ENCODE measurements at regions of chr3 and their contacts with region 1.

Region 1: DNA sequence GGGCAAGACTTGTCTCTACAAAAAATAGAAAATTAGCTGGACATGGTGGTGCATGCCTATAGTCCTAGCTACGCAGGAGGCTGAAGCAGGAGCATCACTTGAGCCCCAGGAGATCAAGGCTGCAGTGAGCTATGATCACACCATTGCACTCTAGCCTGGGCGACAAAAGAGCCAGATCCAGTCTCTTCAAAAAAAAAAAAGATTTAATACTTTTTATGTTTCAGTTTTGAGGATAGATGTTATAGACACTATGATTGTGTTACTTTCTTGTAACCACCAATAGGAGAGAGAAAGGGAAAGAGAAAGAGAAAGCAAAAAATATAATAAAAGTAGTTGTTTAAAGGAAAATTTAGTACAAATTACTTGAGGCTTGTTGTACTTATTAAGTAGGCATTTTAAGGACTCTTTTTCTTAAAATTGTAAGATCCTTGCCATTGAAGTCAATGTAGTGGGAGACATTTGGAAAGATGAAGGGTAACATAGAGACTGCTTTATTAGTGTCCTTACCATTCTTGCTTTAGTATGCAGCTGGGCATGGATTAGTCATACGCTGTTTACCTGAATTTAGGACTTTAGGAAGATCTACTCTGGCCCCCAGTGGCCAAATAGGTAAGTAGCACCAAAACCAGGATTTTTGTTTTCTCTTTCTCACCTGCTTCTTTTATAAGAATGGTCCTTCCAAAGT is 35.1 kb upstream of the ZDHHC23 start:
- DNase-seq: peak; percentile 90
- ATAC-seq: peak; percentile 96
- H3K4me3 ChIP-seq: peak overlapping the region; percentile 10; the same call in 1 of the 2 replicates
- H3K27ac ChIP-seq: no peak overlapping the region
- H3K4me1 ChIP-seq: 0 out of 2 replicates have a peak, but pooled peaks cover 4% of the 10 kb centered on the region
- H3K27me3 ChIP-seq: no peaks in the 10 kb centered on the region
- CTCF ChIP-seq: peak; percentile 91

Region 2: GRCh38 chr3:113736548-113737089 is 176.1 kb before region 1 on chr3:
- CTCF ChIA-PET with region 1: interaction called, 6 read pairs
- POLR2A ChIA-PET with region 1: no interaction called
- intact Hi-C with region 1: loop called (anchors 1 kb)
- DNase-seq: peak; percentile 85
- ATAC-seq: peak; percentile 77
- H3K4me3 ChIP-seq: no peak overlapping the region
- H3K27ac ChIP-seq: no peak overlapping the region
- H3K4me1 ChIP-seq: no peaks in the 10 kb centered on the region
- H3K27me3 ChIP-seq: no peaks in the 10 kb centered on the region
- CTCF ChIP-seq: peak; percentile 83

Region 3: DNA sequence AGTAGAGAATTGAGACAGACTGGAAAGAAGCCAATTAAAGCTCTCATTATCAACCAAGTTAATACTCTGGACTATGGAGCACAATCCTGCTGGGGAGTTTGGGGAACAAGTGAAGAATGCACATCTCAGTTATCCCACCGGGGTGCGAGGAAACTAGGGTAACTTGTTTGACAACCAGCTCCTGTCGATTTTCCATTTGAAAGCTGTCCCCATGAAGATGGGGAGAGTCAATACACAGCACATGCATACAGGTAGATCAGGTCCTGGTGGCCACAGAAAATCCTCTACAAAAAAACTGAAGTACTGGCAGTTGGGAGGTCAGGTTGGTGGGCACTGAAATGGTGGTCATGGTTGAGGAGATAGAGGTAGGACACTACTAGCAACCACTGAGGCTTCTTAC is 99.8 kb before region 1 on chr3:
- CTCF ChIA-PET with region 1: interaction called, 12 read pairs
- POLR2A ChIA-PET with region 1: no interaction called
- intact Hi-C with region 1: no loop called
- DNase-seq: no peak
- ATAC-seq: no peak
- H3K4me3 ChIP-seq: no peak overlapping the region
- H3K27ac ChIP-seq: no peak overlapping the region
- H3K4me1 ChIP-seq: no peaks in the 10 kb centered on the region
- H3K27me3 ChIP-seq: no peaks in the 10 kb centered on the region
- CTCF ChIP-seq: no peak

Region 4: GRCh38 chr3:113838631-113839209 is 74.0 kb before region 1 on chr3 and contains the start of gene GRAMD1C:
- CTCF ChIA-PET with region 1: interaction called, 5 read pairs
- POLR2A ChIA-PET with region 1: interaction called, 5 read pairs
- intact Hi-C with region 1: loop called (anchors 1 kb)
- DNase-seq: peak; percentile 91
- ATAC-seq: peak; percentile 94
- H3K4me3 ChIP-seq: peak within 1 kb of the TSS; percentile 80
- H3K27ac ChIP-seq: no peak within 1 kb of the TSS
- H3K4me1 ChIP-seq: peaks cover 17% of the 10 kb centered on the region
- H3K27me3 ChIP-seq: no peaks in the 10 kb centered on the region
- CTCF ChIP-seq: peak; percentile 90
- total RNA-seq, gene GRAMD1C: 2.8 and 4.5 TPM in 2 replicates

Region 5: GRCh38 chr3:113844622-113845222 is 68.0 kb before region 1 on chr3:
- CTCF ChIA-PET with region 1: interaction called, 25 read pairs
- POLR2A ChIA-PET with region 1: interaction called, 5 read pairs
- intact Hi-C with region 1: loop called (anchors 1 kb)
- DNase-seq: peak; percentile 78
- ATAC-seq: peak; percentile 73
- H3K4me3 ChIP-seq: no peak overlapping the region
- H3K27ac ChIP-seq: no peak overlapping the region
- H3K4me1 ChIP-seq: peaks cover 20% of the 10 kb centered on the region
- H3K27me3 ChIP-seq: no peaks in the 10 kb centered on the region
- CTCF ChIP-seq: peak; percentile 81

Measured in PC-3 (cell line).